Pancreas (tissue), 10 donors: ENCODE measurements at regions of chr20 and their contacts with region 1.

Region 1: DNA sequence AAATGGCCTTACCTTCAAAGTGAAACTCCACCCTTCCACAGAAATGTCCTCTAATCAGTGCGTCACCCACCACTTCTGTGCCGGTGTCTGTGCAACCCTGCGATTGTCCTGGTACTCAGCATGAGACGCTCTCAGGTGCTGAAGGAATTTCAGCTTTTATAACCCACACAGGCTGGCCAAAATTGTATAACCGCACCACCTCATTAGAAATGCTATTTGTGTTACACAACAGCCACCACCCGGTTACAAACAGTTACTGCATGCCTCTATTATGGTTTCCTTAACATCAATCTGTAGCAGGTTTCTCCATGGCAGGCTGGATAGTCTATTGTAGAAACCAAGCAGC is 51.5 kb downstream of the SLC23A2 start:
- DNase-seq: no peak
- ATAC-seq: peak; percentile 64 to 84 (median 76)
- H3K4me3 ChIP-seq: no peak overlapping the region
- H3K27ac ChIP-seq: no peak overlapping the region
- H3K4me1 ChIP-seq: no peaks in the 10 kb centered on the region
- H3K27me3 ChIP-seq: no peaks in the 10 kb centered on the region
- CTCF ChIP-seq: peak in 2 of 4 donors; percentile 21 to 31

Region 2: GRCh38 chr20:4766631-4767030 is 183.2 kb before region 1 on chr20:
- intact Hi-C with region 1: loop called in 1 of 3 experiments (anchors 5 kb)
- DNase-seq: no peak
- ATAC-seq: peak in 2 of 4 donors; percentile 67 to 76
- H3K4me3 ChIP-seq: no peak overlapping the region
- H3K27ac ChIP-seq: no peak overlapping the region
- H3K4me1 ChIP-seq: no peaks in the 10 kb centered on the region
- H3K27me3 ChIP-seq: no peaks in the 10 kb centered on the region
- CTCF ChIP-seq: no peak